ENCODE measurements at regions of chr18 and their contacts with region 1.

Region 1: DNA sequence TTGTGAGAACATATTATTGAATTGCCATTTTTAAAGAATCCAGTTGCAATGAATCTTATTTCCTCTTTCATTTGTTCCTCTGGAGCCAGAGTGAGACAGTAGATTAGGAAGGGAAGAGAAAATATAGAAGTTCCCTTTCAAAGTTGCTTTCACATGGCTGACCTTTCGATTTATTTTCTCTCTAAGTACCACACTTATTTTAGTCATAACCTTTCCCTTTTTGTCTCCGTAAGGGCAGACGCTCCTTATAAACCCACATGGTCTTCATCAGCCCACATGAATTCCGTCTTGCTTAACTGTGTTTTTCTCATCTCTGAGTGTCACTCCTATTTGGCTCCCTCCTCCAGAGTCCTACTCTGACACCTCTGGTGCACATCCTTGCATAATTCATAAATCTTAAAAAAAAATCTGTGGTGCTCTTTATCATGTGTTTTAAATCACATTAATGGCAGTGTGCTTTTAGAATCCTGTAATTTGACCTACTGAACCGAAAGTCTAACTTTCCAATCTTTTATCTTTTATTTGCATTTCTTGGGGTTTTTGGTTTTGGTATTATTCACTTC is 38.5 kb upstream of the ZNF396 start:
- DNase-seq: no peak
- ATAC-seq: peak; percentile 22

Region 2: DNA sequence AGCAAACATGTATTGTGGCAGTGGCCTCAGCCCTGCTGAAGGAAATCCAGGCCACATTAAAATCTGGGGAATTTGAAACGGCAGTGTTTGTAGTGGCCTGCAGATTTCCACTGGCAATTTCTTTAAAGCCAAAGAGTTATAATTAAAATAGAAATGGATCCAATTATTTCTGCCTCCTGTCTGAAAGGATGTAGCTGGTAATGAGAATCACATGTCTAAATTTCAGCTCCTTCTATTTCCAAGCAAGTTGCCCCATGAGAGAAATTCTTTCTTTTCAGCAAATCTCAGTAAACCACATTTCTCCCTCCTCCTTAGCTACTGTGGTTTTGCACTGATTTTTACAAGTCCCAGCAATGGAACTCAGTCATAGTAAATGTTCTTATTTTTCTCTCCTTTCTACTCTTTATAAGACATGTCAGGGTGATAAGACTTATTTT is 17.0 kb after region 1 on chr18:
- intact Hi-C with region 1: no loop called
- DNase-seq: no peak
- ATAC-seq: peak; percentile 37

Region 3: DNA sequence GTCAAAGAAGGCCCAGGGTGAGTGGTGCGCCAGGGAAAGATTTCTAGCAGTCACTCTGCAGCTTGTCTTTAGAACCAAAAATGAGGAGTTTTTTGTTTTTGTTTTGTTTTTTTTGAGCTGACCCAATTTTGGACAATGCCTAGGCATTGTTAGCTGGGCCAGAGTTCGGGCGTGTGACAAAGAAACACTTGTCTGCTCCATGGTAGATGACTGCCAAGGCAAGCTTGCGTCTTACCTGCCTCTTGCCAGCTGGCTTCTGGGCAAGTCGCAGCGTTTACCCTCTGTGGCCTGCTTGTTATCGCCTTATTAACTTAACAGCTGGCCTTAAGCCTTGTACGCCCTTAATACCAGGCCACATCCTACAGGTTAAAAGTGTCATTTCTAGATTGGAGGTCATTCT is 280.2 kb after region 1 on chr18:
- intact Hi-C with region 1: loop called (anchors 10 kb)
- DNase-seq: peak; percentile 81
- ATAC-seq: peak; percentile 94